HCT116 (cell line): ENCODE measurements at regions of chr22 and their contacts with region 1.

Region 1: DNA sequence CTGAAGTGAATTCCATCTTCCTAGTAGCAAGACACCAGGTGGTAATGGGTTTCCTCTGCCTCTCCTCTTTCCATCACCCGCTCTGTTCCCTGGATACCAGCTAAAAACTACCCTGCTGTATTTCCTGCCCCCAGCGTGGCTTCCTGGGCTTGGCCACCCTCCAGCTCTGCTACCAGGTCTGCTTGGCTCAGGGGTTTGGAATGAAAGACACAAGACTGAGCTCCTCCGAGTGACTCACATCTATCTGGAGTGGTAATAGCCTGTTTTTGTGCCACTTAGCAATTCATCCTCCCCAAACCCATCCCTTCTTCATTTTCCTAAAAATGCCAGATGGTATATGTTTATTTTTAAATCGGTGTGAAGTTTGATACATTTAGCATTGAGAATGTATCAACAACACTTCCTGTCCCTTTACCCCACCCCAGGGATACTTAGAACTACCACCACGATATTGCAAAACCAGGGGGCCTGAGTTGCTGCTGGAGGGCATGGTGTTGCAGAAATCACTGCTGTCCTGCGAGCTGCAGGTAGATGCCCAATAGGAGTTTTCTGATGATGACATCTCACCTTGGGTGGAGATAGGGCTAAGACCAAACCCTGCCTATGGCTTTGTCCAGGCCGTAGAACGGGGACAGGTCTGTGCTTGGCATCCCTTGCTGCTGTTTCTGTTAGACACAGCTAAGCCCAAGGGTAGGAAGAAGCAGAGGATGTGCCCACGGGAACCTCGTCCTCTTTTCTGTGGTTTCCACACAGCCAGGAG is 7.5 kb upstream of the MICAL3 start:
- DNase-seq: peak; percentile 82
- ATAC-seq: peak; percentile 85
- H3K4me3 ChIP-seq: peak overlapping the region; percentile 0 to 43; a peak in 3 of 4 replicates
- H3K27ac ChIP-seq: peak overlapping the region; percentile 82
- H3K4me1 ChIP-seq: peaks cover 35 to 43% of the 10 kb centered on the region in 2 experiments
- H3K27me3 ChIP-seq: no peaks in the 10 kb centered on the region
- CTCF ChIP-seq: no peak
- POLR2A ChIP-seq: no peak
- RAD21 ChIP-seq: no peak

Region 2: GRCh38 chr22:17830043-17830961 is 201.6 kb before region 1 on chr22:
- CTCF ChIA-PET with region 1: interaction called, 4 read pairs
- POLR2A ChIA-PET with region 1: no interaction called
- RAD21 ChIA-PET with region 1: no interaction called
- intact Hi-C with region 1: loop called (anchors 1 kb)
- DNase-seq: peak; percentile 52
- ATAC-seq: peak; percentile 97
- H3K4me3 ChIP-seq: no peak overlapping the region
- H3K27ac ChIP-seq: no peak overlapping the region
- H3K4me1 ChIP-seq: no peaks in the 10 kb centered on the region
- H3K27me3 ChIP-seq: no peaks in the 10 kb centered on the region
- CTCF ChIP-seq: peak; percentile 77 to 99 (median 98); a peak in 5 of 6 replicates
- POLR2A ChIP-seq: no peak
- RAD21 ChIP-seq: peak; percentile 90